ENCODE measurements at regions of chr6 and their contacts with region 1.

Region 1: GRCh38 chr6:31559958-31560696 is 12.0 kb upstream of the LTA start:
- DNase-seq: peak in 7 of 9 experiments; percentile 36 to 80 (median 59)
- ATAC-seq: peak; percentile 54
- H3K4me3 ChIP-seq: peak overlapping the region; percentile 4 to 13
- H3K4me3 Mint-ChIP-seq: peak overlapping the region; percentile 80
- H3K27ac ChIP-seq: peak overlapping the region in 1 of 2 experiments; percentile 78
- H3K27ac Mint-ChIP-seq: peak overlapping the region; percentile 90
- H3K4me1 ChIP-seq: peaks cover 52% of the 10 kb centered on the region
- H3K4me1 Mint-ChIP-seq: peaks cover 62% of the 10 kb centered on the region
- H3K27me3 ChIP-seq: no peaks in the 10 kb centered on the region
- H3K27me3 Mint-ChIP-seq: no peaks in the 10 kb centered on the region
- CTCF ChIP-seq: no peak

Region 2: DNA sequence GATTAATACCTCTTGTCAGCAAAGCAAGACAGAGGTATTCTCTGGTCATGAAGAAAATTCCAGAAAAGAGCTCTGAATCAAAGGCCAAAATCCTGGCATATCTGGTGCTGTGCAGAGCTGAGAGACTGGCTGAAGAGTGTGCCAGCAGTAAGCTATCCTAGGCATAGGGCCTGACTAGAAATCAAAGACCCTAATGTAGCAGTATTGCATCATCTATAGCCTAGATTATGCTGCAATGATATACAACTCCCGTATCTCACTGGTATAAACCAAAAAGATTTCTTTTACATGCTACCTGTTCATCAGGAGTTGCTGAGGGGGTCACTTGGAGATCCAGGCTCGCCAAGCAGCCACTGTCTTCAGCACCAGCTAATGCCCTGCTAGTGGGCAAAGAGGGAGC is 1264.3 kb before region 1 on chr6:
- CTCF ChIA-PET with region 1: no interaction called
- POLR2A ChIA-PET with region 1: no interaction called
- intact Hi-C with region 1: no loop called
- DNase-seq: no peak
- ATAC-seq: no peak
- H3K4me3 ChIP-seq: no peak overlapping the region
- H3K4me3 Mint-ChIP-seq: no peak overlapping the region
- H3K27ac ChIP-seq: no peak overlapping the region
- H3K27ac Mint-ChIP-seq: peak overlapping the region; percentile 50
- H3K4me1 ChIP-seq: no peaks in the 10 kb centered on the region
- H3K4me1 Mint-ChIP-seq: peaks cover 2% of the 10 kb centered on the region
- H3K27me3 ChIP-seq: no peaks in the 10 kb centered on the region
- H3K27me3 Mint-ChIP-seq: no peaks in the 10 kb centered on the region
- CTCF ChIP-seq: no peak

Region 3: GRCh38 chr6:31575335-31575901 is 15.3 kb after region 1 on chr6 and contains the start of gene TNF:
- CTCF ChIA-PET with region 1: interaction called, 1,206 read pairs
- POLR2A ChIA-PET with region 1: interaction called, 43 read pairs
- intact Hi-C with region 1: loop called (anchors 1 kb)
- DNase-seq: peak in 8 of 9 experiments; percentile 45 to 84 (median 64)
- ATAC-seq: peak; percentile 6
- H3K4me3 ChIP-seq: peak within 1 kb of the TSS; percentile 26 to 71
- H3K4me3 Mint-ChIP-seq: peak within 1 kb of the TSS; percentile 97
- H3K27ac ChIP-seq: peak within 1 kb of the TSS; percentile 57 to 94
- H3K27ac Mint-ChIP-seq: peak within 1 kb of the TSS; percentile 99
- H3K4me1 ChIP-seq: peaks cover 75% of the 10 kb centered on the region
- H3K4me1 Mint-ChIP-seq: peaks cover 88% of the 10 kb centered on the region
- H3K27me3 ChIP-seq: no peaks in the 10 kb centered on the region
- H3K27me3 Mint-ChIP-seq: no peaks in the 10 kb centered on the region
- CTCF ChIP-seq: no peak
- total RNA-seq, gene TNF: 30.1 to 32.7 TPM

Region 4: GRCh38 chr6:31619805-31620585 is 59.9 kb after region 1 on chr6:
- CTCF ChIA-PET with region 1: no interaction called
- POLR2A ChIA-PET with region 1: no interaction called
- intact Hi-C with region 1: no loop called
- DNase-seq: peak; percentile 94 to 99 (median 96)
- ATAC-seq: peak; percentile 80
- H3K4me3 ChIP-seq: peak overlapping the region; percentile 83 to 96
- H3K4me3 Mint-ChIP-seq: peak overlapping the region; percentile 91
- H3K27ac ChIP-seq: peak overlapping the region; percentile 95 to 99
- H3K27ac Mint-ChIP-seq: peak overlapping the region; percentile 96
- H3K4me1 ChIP-seq: peaks cover 37% of the 10 kb centered on the region
- H3K4me1 Mint-ChIP-seq: peaks cover 52% of the 10 kb centered on the region
- H3K27me3 ChIP-seq: no peaks in the 10 kb centered on the region
- H3K27me3 Mint-ChIP-seq: no peaks in the 10 kb centered on the region
- CTCF ChIP-seq: no peak

Region 5: DNA sequence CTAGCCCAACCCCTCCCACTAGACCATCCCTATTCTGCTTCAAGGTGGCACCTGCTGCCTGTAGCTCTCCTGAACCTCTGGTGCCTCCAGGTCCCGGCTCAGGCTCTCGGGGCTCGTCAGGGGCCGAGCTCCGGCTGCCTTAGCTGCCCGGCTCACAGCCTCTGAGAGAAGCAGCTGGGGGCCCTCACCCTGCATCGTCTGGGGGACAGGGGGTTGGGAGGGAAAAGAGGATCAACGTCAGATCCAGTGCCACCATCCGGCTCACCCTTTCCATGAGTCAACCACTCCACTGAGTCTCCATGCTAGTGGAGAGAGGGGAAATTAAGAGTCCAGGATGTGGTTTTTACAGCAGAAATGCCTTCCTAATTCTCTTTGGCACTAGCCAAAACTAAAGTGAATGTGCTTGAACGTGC is 79.3 kb after region 1 on chr6:
- CTCF ChIA-PET with region 1: no interaction called
- POLR2A ChIA-PET with region 1: no interaction called
- intact Hi-C with region 1: no loop called
- DNase-seq: no peak
- ATAC-seq: no peak
- H3K4me3 ChIP-seq: no peak overlapping the region
- H3K4me3 Mint-ChIP-seq: no peak overlapping the region
- H3K27ac ChIP-seq: no peak overlapping the region
- H3K27ac Mint-ChIP-seq: no peak overlapping the region
- H3K4me1 ChIP-seq: no peaks in the 10 kb centered on the region
- H3K4me1 Mint-ChIP-seq: no peaks in the 10 kb centered on the region
- H3K27me3 ChIP-seq: no peaks in the 10 kb centered on the region
- H3K27me3 Mint-ChIP-seq: no peaks in the 10 kb centered on the region
- CTCF ChIP-seq: no peak

Region 6: GRCh38 chr6:32163559-32164258 is 603.6 kb after region 1 on chr6:
- CTCF ChIA-PET with region 1: no interaction called
- POLR2A ChIA-PET with region 1: no interaction called
- intact Hi-C with region 1: no loop called
- DNase-seq: no peak
- ATAC-seq: no peak
- H3K4me3 ChIP-seq: no peak overlapping the region
- H3K4me3 Mint-ChIP-seq: no peak overlapping the region
- H3K27ac ChIP-seq: no peak overlapping the region
- H3K27ac Mint-ChIP-seq: no peak overlapping the region
- H3K4me1 ChIP-seq: no peaks in the 10 kb centered on the region
- H3K4me1 Mint-ChIP-seq: no peaks in the 10 kb centered on the region
- H3K27me3 ChIP-seq: no peaks in the 10 kb centered on the region
- H3K27me3 Mint-ChIP-seq: no peaks in the 10 kb centered on the region
- CTCF ChIP-seq: no peak